ENCODE measurements at regions of chr14 and their contacts with region 1.

Region 1: GRCh38 chr14:23327947-23328744 is 6.9 kb downstream of the PABPN1 start:
- DNase-seq: peak; percentile 50 to 70 (median 63)
- ATAC-seq: peak; percentile 65 to 66
- H3K4me3 ChIP-seq: no peak overlapping the region
- H3K27ac ChIP-seq: no peak overlapping the region
- H3K4me1 ChIP-seq: no peaks in the 10 kb centered on the region
- H3K27me3 ChIP-seq: no peaks in the 10 kb centered on the region

Region 2: GRCh38 chr14:23365016-23365602 is 37.0 kb after region 1 on chr14 and contains the start of gene EFS:
- intact Hi-C with region 1: no loop called
- DNase-seq: peak; percentile 72 to 91 (median 89)
- ATAC-seq: peak; percentile 65 to 71
- H3K4me3 ChIP-seq: peak within 1 kb of the TSS; percentile 40
- H3K27ac ChIP-seq: peak within 1 kb of the TSS; percentile 81
- H3K4me1 ChIP-seq: no peaks in the 10 kb centered on the region
- H3K27me3 ChIP-seq: no peaks in the 10 kb centered on the region
- total RNA-seq, gene EFS: 6.7 to 10.1 (median 7.8) TPM

Region 3: DNA sequence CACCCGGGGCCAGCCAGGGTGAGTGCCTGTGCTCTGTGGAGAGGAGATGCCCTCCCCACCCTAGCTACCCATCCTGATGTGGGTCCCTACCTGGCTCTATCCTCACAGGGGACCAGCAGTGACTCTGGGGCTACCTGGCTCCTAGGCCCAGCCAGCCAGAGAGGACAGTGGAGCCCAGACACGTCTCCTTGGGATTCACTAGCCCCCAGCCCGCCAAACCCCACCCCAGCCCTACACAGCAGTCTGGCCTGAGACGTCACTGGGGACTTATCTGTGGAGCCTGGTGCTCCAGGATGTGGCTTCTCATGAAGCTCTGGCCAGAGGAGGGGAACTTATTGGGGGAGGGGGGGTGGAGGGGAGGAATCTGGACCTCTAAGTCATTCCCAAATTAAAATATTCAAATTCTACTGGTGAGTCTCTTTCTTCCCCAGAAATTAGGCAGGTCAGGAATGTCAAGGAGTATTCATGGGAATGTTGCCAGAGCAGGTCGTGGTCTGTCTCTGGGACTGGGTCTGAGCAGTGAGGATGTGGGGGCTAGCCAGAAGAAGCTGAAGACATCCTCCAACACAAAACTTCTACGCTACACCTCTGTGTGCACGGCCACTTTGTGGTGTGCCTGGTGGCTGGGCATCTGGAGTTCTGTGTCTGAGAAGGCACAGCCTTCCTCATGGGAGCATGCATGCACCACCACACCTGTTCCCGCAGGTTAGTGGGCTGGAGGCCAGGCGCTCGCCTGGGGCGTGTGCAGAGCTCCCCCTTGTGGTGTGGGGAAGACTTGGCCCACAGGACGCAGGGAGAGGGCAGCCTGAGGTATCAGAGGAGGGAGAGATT is 51.4 kb after region 1 on chr14:
- intact Hi-C with region 1: loop called in 2 of 4 experiments (anchors 5 kb)
- DNase-seq: peak; percentile 67 to 90 (median 89)
- ATAC-seq: peak; percentile 24 to 32
- H3K4me3 ChIP-seq: no peak overlapping the region
- H3K27ac ChIP-seq: no peak overlapping the region
- H3K4me1 ChIP-seq: no peaks in the 10 kb centered on the region
- H3K27me3 ChIP-seq: no peaks in the 10 kb centered on the region

Region 4: DNA sequence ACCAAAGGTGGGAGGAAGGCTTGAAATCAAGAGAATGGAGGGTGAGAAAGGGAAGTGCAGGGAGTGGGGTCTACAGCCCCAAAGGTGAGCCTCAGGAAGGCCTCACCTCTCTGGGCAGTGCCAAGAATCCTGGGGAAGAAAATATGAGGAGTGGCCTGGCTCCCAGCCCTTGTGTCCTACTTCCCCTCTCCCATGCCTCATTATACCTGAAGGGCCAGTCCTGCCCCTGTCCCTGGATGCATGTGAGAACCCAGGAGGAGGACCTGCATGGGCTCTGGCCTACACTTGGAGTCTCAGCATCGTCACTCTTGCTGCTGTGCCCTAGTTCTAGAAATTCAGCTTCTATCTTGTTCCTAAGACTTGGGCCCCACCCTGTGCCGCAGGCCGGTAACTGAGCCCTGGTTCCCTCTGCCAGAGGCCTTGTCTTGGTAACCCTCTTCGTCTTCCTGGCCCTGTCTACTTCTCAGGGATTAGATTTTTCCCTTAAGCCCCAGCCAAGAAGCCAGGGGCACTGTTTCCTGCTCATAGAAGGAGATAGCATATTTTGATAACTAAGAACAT is 118.2 kb after region 1 on chr14:
- intact Hi-C with region 1: loop called (anchors 5 to 10 kb)
- DNase-seq: peak in 2 of 3 donors; percentile 70 to 80
- ATAC-seq: peak; percentile 54 to 68
- H3K4me3 ChIP-seq: no peak overlapping the region
- H3K27ac ChIP-seq: peak overlapping the region; percentile 69
- H3K4me1 ChIP-seq: peaks cover 2% of the 10 kb centered on the region
- H3K27me3 ChIP-seq: no peaks in the 10 kb centered on the region

Region 5: DNA sequence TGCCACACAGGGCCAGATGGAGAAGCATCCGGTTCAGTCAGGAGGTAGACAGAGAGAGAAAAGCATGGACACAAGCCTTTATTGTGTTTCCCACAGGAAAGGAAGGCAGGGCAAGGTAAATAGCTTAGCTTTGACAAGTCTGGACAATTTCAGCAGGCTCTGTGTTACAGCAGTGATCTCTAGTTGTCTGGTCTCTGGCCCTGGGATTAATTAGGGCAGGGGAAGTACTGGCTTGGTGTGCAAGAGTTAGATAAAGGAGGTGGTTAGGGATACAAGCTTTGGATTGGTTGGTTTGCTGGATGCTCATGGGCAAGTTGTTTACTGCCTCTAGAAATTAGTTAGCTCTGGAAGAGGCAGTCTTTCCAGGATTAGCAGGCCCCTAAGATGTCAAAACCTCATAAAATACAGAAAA is 126.3 kb after region 1 on chr14:
- intact Hi-C with region 1: loop called (anchors 5 to 10 kb)
- DNase-seq: no peak
- ATAC-seq: peak in 1 of 2 donors; percentile 11
- H3K4me3 ChIP-seq: no peak overlapping the region
- H3K27ac ChIP-seq: no peak overlapping the region
- H3K4me1 ChIP-seq: no peaks in the 10 kb centered on the region
- H3K27me3 ChIP-seq: no peaks in the 10 kb centered on the region

Measured in right cardiac atrium (tissue), 5 donors.